Natural killer cell (primary cell): ENCODE measurements at regions of chr5 and their contacts with region 1.

Region 1: DNA sequence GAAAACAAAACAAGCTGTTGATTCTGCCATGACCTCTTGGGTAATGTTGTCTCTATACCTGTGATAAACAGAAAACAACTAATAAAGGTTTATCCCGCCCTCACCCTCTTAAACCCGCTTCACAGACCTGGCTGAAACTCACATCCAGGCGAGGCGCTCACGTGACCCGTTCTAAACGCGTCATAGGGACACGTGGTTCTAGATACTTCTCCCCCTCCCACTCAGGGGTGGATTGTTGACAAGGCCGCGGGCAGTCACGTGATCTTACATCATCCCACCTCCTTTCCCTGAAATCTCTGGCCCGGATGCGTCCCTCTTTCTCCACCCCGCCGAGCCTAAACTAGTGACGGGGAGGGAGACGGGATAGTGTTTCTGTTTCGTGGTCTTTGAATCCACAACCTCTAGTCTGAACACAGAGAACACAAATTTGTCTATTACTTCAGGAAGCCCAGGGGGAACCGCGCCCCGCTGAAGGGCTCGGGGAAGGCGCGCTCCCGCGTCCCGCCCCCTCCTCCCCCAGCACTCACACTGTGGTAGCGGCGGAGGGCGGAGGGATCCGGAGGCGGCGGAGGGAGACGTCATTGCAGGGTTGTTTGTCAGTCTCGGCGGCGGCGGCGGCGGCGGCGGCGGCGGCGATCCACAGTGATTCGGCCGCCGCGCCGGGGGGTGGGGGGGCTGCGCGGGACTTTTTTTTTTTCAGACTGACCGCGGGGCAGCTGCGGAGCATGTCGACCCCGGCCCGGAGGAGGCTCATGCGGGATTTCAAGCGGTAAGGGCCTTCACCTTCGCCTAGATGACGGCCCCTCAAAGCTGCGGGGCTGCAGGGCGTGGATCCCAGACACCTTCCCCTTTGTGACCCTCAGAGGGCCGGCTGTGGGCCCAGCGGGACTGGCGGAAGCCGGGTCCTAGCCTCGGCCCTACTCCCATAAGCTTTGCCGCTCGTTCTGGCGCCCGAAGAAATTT is at the start of gene UBE2B:
- DNase-seq: peak; percentile 95 to 99
- ATAC-seq: peak; percentile 78 to 91 (median 79)
- H3K4me3 ChIP-seq: peak within 1 kb of the TSS; percentile 100
- H3K4me3 Mint-ChIP-seq: peak within 1 kb of the TSS; percentile 94
- H3K27ac ChIP-seq: peak within 1 kb of the TSS; percentile 100
- H3K27ac Mint-ChIP-seq: peak within 1 kb of the TSS; percentile 98 to 99
- H3K4me1 ChIP-seq: peaks cover 26% of the 10 kb centered on the region
- H3K4me1 Mint-ChIP-seq: peaks cover 54 to 62% of the 10 kb centered on the region in 2 donors
- H3K27me3 ChIP-seq: no peaks in the 10 kb centered on the region
- H3K27me3 Mint-ChIP-seq: no peaks in the 10 kb centered on the region
- CTCF ChIP-seq: no peak
- total RNA-seq, gene UBE2B: 93.5 to 124 (median 116) TPM

Region 2: DNA sequence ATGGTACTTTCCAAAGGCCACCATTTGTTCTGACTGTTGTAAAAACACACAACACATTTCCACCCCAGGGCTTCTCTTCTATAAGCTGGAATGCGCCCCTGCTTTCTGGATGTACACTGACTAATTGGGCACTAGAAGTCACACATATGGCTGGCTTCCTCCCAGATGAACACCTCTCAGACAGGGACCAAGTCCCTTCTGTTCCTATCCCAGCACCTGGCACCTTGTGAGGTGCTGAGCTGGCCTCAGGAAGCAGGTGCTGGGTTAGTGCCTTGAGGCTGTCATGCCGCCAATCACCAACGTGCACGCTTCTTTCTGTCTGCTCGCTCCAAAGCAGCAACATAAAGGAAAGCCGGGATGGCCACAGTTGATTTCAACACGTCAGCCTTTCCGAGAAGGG is 852.0 kb before region 1 on chr5:
- intact Hi-C with region 1: no loop called
- DNase-seq: no peak
- ATAC-seq: no peak
- H3K4me3 ChIP-seq: no peak overlapping the region
- H3K4me3 Mint-ChIP-seq: no peak overlapping the region
- H3K27ac ChIP-seq: no peak overlapping the region
- H3K27ac Mint-ChIP-seq: no peak overlapping the region
- H3K4me1 ChIP-seq: no peaks in the 10 kb centered on the region
- H3K4me1 Mint-ChIP-seq: no peaks in the 10 kb centered on the region
- H3K27me3 ChIP-seq: no peaks in the 10 kb centered on the region
- H3K27me3 Mint-ChIP-seq: peaks cover 16 to 31% of the 10 kb centered on the region in 2 donors
- CTCF ChIP-seq: no peak

Region 3: GRCh38 chr5:134176511-134177368 is 194.4 kb before region 1 on chr5 and contains the start of gene SKP1:
- intact Hi-C with region 1: loop called (anchors 5 kb)
- DNase-seq: peak; percentile 88 to 93
- ATAC-seq: peak; percentile 88 to 95 (median 89)
- H3K4me3 ChIP-seq: peak within 1 kb of the TSS; percentile 100
- H3K4me3 Mint-ChIP-seq: peak within 1 kb of the TSS; percentile 89
- H3K27ac ChIP-seq: peak within 1 kb of the TSS; percentile 99
- H3K27ac Mint-ChIP-seq: peak within 1 kb of the TSS; percentile 92 to 97
- H3K4me1 ChIP-seq: peaks cover 12% of the 10 kb centered on the region
- H3K4me1 Mint-ChIP-seq: peaks cover 28 to 34% of the 10 kb centered on the region in 2 donors
- H3K27me3 ChIP-seq: no peaks in the 10 kb centered on the region
- H3K27me3 Mint-ChIP-seq: no peaks in the 10 kb centered on the region
- CTCF ChIP-seq: no peak
- total RNA-seq, gene SKP1: 301 to 338 (median 315) TPM

Region 4: DNA sequence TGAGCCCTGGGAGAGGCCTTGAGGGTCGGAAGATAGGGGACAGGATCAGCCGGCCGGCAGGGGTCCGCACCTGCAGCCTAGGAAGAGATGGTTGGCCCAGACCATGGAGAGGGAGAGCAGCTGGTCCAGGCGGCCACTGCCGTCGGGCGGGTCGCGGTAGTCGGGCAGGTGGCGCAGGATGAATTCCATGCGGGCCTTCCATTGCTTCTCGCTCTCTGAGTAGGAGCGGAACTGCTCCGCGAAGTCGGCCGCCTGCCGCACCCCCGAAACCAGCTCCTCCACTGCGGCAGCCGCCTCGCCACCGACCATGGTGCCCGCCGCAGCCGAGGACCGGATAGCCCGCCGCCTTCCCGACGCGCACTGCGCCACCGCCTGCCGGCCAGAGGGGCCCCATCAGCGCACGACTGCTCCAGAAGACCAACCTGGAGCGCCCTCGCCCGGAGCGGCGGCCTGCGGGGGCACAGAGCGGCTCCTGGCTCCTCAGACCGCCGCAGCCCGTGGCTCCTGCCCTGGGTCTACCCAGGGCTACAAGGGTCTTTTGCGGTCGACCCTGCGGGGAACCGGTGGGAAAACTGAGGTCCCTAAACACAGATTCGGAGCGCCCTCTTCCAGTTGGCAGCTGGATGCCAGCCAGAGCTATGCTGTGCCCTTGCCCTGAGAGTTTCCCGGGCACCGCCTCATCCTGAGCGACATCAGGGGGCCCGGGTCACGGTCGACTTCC is 40.6 kb after region 1 on chr5 and contains the start of gene CDKN2AIPNL:
- intact Hi-C with region 1: loop called (anchors 5 kb)
- DNase-seq: peak; percentile 88 to 94
- ATAC-seq: peak; percentile 99 to 100 (median 99)
- H3K4me3 ChIP-seq: peak within 1 kb of the TSS; percentile 93
- H3K4me3 Mint-ChIP-seq: peak within 1 kb of the TSS; percentile 95
- H3K27ac ChIP-seq: peak within 1 kb of the TSS; percentile 80
- H3K27ac Mint-ChIP-seq: peak within 1 kb of the TSS; percentile 85 to 92
- H3K4me1 ChIP-seq: peaks cover 23% of the 10 kb centered on the region
- H3K4me1 Mint-ChIP-seq: peaks cover 20 to 26% of the 10 kb centered on the region in 2 donors
- H3K27me3 ChIP-seq: no peaks in the 10 kb centered on the region
- H3K27me3 Mint-ChIP-seq: no peaks in the 10 kb centered on the region
- CTCF ChIP-seq: peak; percentile 75
- total RNA-seq, gene CDKN2AIPNL: 12.3 to 15.5 (median 13.4) TPM

Region 5: DNA sequence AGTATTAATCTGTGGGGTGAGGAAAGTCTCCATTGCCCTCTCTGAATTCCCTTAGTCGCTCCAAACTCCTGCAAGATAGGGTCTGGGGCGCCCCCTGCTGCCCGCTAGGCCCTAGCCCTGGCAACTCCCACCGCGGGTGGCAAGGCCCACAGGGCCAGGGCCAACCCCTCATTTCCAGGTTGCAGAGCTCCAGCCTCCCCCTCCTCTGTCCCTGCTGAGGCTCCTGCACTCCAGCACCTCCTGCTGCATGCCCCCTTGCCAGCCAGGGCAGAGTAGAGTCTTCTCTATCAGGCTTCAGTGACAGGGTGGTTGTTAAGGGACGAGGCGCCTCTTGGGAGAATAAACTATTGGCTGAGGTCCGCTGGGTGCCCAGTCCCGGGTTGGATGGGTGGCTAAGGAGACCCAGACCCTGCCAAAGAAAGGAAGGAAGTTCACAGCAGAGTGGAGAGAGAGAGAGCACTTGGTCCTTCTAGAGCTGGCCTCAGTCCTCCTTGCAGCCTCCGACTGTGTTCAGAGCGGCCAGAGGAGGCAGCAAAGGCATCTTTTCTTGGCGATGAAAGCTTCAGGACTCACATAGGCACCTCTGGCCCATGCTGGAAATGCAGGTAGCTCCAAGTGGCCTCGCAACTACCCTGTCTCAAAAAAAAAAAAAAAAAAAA is 215.8 kb after region 1 on chr5:
- intact Hi-C with region 1: loop called (anchors 5 kb)
- DNase-seq: peak; percentile 77 to 84
- ATAC-seq: peak; percentile 85 to 92 (median 88)
- H3K4me3 ChIP-seq: no peak overlapping the region
- H3K4me3 Mint-ChIP-seq: no peak overlapping the region
- H3K27ac ChIP-seq: no peak overlapping the region
- H3K27ac Mint-ChIP-seq: peak overlapping the region in 1 of 2 donors; percentile 51
- H3K4me1 ChIP-seq: peaks cover 4% of the 10 kb centered on the region
- H3K4me1 Mint-ChIP-seq: peaks cover 5 to 6% of the 10 kb centered on the region in 2 donors
- H3K27me3 ChIP-seq: no peaks in the 10 kb centered on the region
- H3K27me3 Mint-ChIP-seq: no peaks in the 10 kb centered on the region
- CTCF ChIP-seq: peak; percentile 97

Region 6: DNA sequence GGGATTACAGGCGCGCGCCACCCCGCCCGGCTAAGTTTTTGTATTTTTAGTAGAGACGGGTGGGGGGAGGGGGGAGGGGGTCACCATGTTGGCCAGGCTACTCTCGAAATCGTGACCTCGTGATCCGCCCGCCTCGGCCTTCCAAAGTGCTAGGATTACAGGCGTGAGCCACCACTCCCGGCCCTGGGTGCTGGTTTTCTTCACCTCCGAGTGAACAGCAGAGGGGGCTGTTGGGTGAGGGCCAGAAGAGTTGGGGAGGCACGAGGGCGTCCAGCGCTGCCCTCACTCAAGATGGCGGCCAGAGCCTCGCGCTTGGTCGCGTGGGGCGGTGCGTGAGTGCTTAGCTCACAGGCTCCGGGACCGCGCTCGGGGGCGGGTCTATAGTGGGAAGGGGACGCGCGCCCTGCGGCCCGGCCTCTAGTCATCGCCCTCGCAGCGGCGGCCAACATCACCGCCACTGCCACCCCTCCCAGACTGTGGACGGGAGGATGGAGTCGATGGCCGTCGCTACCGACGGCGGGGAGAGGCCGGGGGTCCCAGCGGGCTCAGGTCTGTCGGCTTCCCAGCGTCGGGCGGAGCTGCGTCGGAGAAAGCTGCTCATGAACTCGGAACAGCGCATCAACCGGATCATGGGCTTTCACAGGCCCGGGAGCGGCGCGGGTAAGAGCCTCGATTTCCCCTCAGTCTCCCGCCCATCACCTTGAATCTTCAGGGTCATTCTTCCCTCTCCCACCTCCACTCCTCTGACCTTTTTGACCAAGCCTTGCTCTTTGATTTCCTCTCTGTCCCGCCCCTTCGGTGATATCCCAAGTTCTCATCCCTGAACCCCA is 367.2 kb after region 1 on chr5 and contains the start of gene CAMLG:
- intact Hi-C with region 1: loop called (anchors 2 kb)
- DNase-seq: peak; percentile 97 to 99
- ATAC-seq: peak; percentile 96 to 100 (median 97)
- H3K4me3 ChIP-seq: peak within 1 kb of the TSS; percentile 93
- H3K4me3 Mint-ChIP-seq: peak within 1 kb of the TSS; percentile 98
- H3K27ac ChIP-seq: peak within 1 kb of the TSS; percentile 89
- H3K27ac Mint-ChIP-seq: peak within 1 kb of the TSS; percentile 96 to 97
- H3K4me1 ChIP-seq: peaks cover 18% of the 10 kb centered on the region
- H3K4me1 Mint-ChIP-seq: peaks cover 16 to 27% of the 10 kb centered on the region in 2 donors
- H3K27me3 ChIP-seq: no peaks in the 10 kb centered on the region
- H3K27me3 Mint-ChIP-seq: no peaks in the 10 kb centered on the region
- CTCF ChIP-seq: peak; percentile 75
- total RNA-seq, gene CAMLG: 23.5 to 35.9 (median 34.6) TPM